ENCODE measurements at regions of chr7 and their contacts with region 1.

Region 1: GRCh38 chr7:64665980-64666662 is at the start of gene ZNF107:
- DNase-seq: peak; percentile 91 to 95
- ATAC-seq: peak; percentile 99 to 100 (median 100)
- H3K4me3 ChIP-seq: peak within 1 kb of the TSS; percentile 65 to 91 (median 82)
- H3K27ac ChIP-seq: peak within 1 kb of the TSS in 9 of 10 donors; percentile 69 to 84 (median 73)
- H3K4me1 ChIP-seq: peaks cover 0 to 25% (median 11%) of the 10 kb centered on the region in 9 donors
- H3K27me3 ChIP-seq: no peaks in the 10 kb centered on the region
- CTCF ChIP-seq: no peak
- total RNA-seq, gene ZNF107: 1.3 to 2.8 (median 1.9) TPM

Region 2: DNA sequence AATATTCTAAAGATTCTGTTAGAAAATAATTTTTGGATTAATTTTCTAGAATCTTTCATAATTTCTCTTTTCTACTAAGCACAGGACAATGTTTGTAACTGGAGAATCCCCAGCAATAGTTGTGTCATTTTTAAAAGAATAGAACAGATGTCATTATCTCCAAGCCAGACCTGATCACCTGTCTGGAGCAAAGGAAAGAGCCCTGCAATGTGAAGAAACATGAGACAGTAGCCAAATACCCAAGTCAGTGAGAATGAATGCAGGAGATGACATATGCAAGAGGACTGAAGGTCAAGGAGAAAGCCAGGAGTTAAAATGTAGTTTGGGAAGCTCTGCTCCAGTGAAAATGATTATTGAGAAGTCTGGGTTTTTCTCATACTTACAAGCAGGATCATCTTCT is 102.7 kb after region 1 on chr7:
- intact Hi-C with region 1: no loop called
- DNase-seq: no peak
- ATAC-seq: no peak
- H3K4me3 ChIP-seq: no peak overlapping the region
- H3K27ac ChIP-seq: no peak overlapping the region
- H3K4me1 ChIP-seq: no peaks in the 10 kb centered on the region
- H3K27me3 ChIP-seq: no peaks in the 10 kb centered on the region
- CTCF ChIP-seq: no peak

Region 3: GRCh38 chr7:64794171-64794844 is 128.2 kb after region 1 on chr7 and contains the start of gene ZNF138:
- intact Hi-C with region 1: loop called in 1 of 10 experiments (anchors 5 kb)
- DNase-seq: peak; percentile 94 to 97
- ATAC-seq: peak; percentile 100
- H3K4me3 ChIP-seq: peak within 1 kb of the TSS; percentile 43 to 86 (median 81)
- H3K27ac ChIP-seq: peak within 1 kb of the TSS in 9 of 10 donors; percentile 54 to 88 (median 80)
- H3K4me1 ChIP-seq: peaks cover 0 to 23% (median 13%) of the 10 kb centered on the region in 9 donors
- H3K27me3 ChIP-seq: no peaks in the 10 kb centered on the region
- CTCF ChIP-seq: peak in 2 of 9 donors; percentile 15 to 23
- total RNA-seq, gene ZNF138: 3.9 to 6.7 (median 5.1) TPM